ENCODE measurements at regions of chr13 and their contacts with region 1.

Region 1: DNA sequence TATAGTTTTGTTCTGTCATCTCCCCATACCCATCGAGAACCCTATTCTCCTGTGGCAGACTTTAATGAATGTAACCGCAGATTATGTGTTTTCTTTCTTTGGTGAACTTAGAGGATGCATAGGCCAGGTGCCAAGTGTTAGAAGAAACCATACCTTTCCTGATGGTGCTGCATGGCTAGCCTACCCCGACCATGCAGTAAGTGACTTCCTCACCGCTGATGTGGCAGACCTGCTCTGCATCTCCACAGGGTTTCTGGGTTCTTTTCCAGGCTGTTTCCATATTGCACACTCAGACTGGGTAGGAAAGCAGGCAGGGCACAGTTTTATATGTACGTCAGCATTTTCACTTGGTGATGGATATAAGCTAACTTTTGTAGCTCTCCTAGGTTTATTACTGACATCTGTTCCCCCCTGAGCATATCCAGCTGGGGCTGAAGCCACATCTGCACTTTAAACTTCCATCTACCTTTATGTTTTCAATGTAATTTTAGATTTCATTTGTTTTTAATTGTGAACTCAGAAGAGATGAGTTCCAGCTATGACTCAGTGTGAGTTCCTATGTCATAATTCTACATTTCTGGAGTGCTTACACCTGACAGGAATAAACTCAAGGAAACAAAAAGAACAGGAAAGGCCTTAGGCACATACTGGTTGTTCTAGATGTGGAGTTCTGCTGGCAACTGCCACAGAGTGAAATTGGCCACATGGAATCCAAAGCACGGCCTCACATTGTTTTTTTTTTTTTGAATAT is 42.3 kb downstream of the LRCH1 start:
- DNase-seq: no peak
- ATAC-seq: peak; percentile 60
- H3K4me3 ChIP-seq: peak overlapping the region; percentile 12; the same call in 1 of the 2 replicates
- H3K27ac ChIP-seq: peak overlapping the region; percentile 62
- H3K4me1 ChIP-seq: peaks cover 76% of the 10 kb centered on the region
- H3K27me3 ChIP-seq: no peaks in the 10 kb centered on the region
- CTCF ChIP-seq: no peak
- EP300 ChIP-seq: no peak; a peak in 1 of 4 replicates
- POLR2A ChIP-seq: no peak
- RAD21 ChIP-seq: no peak

Region 2: DNA sequence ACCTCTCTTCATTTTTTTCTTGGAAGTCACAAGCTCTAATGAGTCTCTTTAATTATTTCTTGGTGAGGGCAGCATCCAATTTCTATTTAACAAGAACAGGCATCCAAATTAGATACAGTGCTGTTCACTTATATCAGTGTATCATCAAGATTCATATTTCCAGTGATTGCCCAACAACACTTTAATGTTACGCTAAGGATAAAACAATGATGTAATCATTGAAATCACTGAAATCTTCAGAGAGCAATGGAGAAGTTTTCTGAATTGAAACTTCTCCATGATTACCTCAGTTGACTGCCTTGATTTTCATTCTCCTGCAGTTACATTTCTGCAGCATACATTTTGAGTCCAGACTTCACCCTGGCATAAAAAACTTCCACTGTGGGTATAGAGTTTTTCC is 59.5 kb before region 1 on chr13:
- CTCF ChIA-PET with region 1: no interaction called
- POLR2A ChIA-PET with region 1: no interaction called
- RAD21 ChIA-PET with region 1: no interaction called
- SMC1A ChIA-PET with region 1: no interaction called
- in situ Hi-C with region 1: no loop called
- intact Hi-C with region 1: no loop called
- DNase-seq: no peak
- ATAC-seq: no peak
- H3K4me3 ChIP-seq: no peak overlapping the region
- H3K27ac ChIP-seq: no peak overlapping the region
- H3K4me1 ChIP-seq: no peaks in the 10 kb centered on the region
- H3K27me3 ChIP-seq: no peaks in the 10 kb centered on the region
- CTCF ChIP-seq: no peak
- EP300 ChIP-seq: no peak
- POLR2A ChIP-seq: no peak
- RAD21 ChIP-seq: no peak

Region 3: GRCh38 chr13:46571189-46571908 is 24.0 kb before region 1 on chr13:
- CTCF ChIA-PET with region 1: interaction called, 6 read pairs
- POLR2A ChIA-PET with region 1: interaction called, 6 read pairs
- RAD21 ChIA-PET with region 1: interaction called, 97 read pairs
- SMC1A ChIA-PET with region 1: interaction called, 367 read pairs
- in situ Hi-C with region 1: no loop called
- intact Hi-C with region 1: no loop called
- DNase-seq: no peak
- ATAC-seq: peak; percentile 73
- H3K4me3 ChIP-seq: peak overlapping the region; percentile 20; the same call in 1 of the 2 replicates
- H3K27ac ChIP-seq: peak overlapping the region; percentile 78
- H3K4me1 ChIP-seq: peaks cover 53% of the 10 kb centered on the region
- H3K27me3 ChIP-seq: no peaks in the 10 kb centered on the region
- CTCF ChIP-seq: no peak
- EP300 ChIP-seq: no peak
- POLR2A ChIP-seq: no peak
- RAD21 ChIP-seq: no peak

Region 4: GRCh38 chr13:46633416-46633815 is 38.1 kb after region 1 on chr13:
- CTCF ChIA-PET with region 1: interaction called, 6 read pairs
- POLR2A ChIA-PET with region 1: interaction called, 4 read pairs
- RAD21 ChIA-PET with region 1: interaction called, 3 read pairs
- SMC1A ChIA-PET with region 1: interaction called, 11 read pairs
- in situ Hi-C with region 1: no loop called
- intact Hi-C with region 1: no loop called
- DNase-seq: no peak
- ATAC-seq: no peak
- H3K4me3 ChIP-seq: no peak overlapping the region
- H3K27ac ChIP-seq: no peak overlapping the region
- H3K4me1 ChIP-seq: peaks cover 18% of the 10 kb centered on the region
- H3K27me3 ChIP-seq: no peaks in the 10 kb centered on the region
- CTCF ChIP-seq: no peak
- EP300 ChIP-seq: no peak
- POLR2A ChIP-seq: no peak
- RAD21 ChIP-seq: no peak

Region 5: GRCh38 chr13:46648166-46648635 is 52.9 kb after region 1 on chr13:
- CTCF ChIA-PET with region 1: interaction called, 3 read pairs
- POLR2A ChIA-PET with region 1: interaction called, 9 read pairs
- RAD21 ChIA-PET with region 1: interaction called, 6 read pairs
- SMC1A ChIA-PET with region 1: interaction called, 12 read pairs
- in situ Hi-C with region 1: no loop called
- intact Hi-C with region 1: no loop called
- DNase-seq: no peak
- ATAC-seq: peak; percentile 95
- H3K4me3 ChIP-seq: no peak overlapping the region
- H3K27ac ChIP-seq: no peak overlapping the region
- H3K4me1 ChIP-seq: peaks cover 34% of the 10 kb centered on the region
- H3K27me3 ChIP-seq: no peaks in the 10 kb centered on the region
- CTCF ChIP-seq: no peak
- EP300 ChIP-seq: no peak
- POLR2A ChIP-seq: no peak
- RAD21 ChIP-seq: no peak

Region 6: DNA sequence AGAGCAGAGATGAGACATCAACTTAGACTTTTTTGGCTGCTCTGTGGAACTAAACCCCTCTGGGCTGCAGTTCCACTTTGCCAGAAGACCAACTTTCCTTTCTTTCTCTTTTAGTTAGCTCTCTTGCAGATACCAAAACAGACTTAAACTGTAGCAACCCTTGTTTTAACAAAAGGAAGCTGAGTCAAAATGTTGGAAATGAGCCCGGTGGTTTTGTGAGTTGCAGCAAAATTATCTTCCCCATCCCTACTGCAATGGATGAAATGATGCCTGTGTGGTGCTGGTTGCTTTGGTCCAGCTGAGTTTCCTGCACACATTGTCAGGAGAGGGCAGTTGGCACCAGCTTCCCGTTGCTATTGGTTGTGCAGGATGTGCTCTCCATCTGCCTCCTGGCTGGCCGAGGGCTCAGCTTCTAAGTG is 73.0 kb after region 1 on chr13:
- CTCF ChIA-PET with region 1: interaction called, 5 read pairs
- POLR2A ChIA-PET with region 1: interaction called, 3 read pairs
- RAD21 ChIA-PET with region 1: interaction called, 12 read pairs
- SMC1A ChIA-PET with region 1: interaction called, 95 read pairs
- in situ Hi-C with region 1: no loop called
- intact Hi-C with region 1: no loop called
- DNase-seq: no peak
- ATAC-seq: peak; percentile 11
- H3K4me3 ChIP-seq: peak overlapping the region; percentile 66
- H3K27ac ChIP-seq: peak overlapping the region; percentile 91
- H3K4me1 ChIP-seq: peaks cover 30% of the 10 kb centered on the region
- H3K27me3 ChIP-seq: no peaks in the 10 kb centered on the region
- CTCF ChIP-seq: no peak
- EP300 ChIP-seq: 0 out of 4 replicates have a peak, but pooled peaks of 1 of the 2 experiments have one; percentile 17
- POLR2A ChIP-seq: no peak
- RAD21 ChIP-seq: no peak

Region 7: GRCh38 chr13:46953331-46953730 is 358.0 kb after region 1 on chr13:
- CTCF ChIA-PET with region 1: no interaction called
- POLR2A ChIA-PET with region 1: no interaction called
- RAD21 ChIA-PET with region 1: no interaction called
- SMC1A ChIA-PET with region 1: no interaction called
- in situ Hi-C with region 1: no loop called
- intact Hi-C with region 1: no loop called
- DNase-seq: no peak
- ATAC-seq: no peak
- H3K4me3 ChIP-seq: no peak overlapping the region
- H3K27ac ChIP-seq: no peak overlapping the region
- H3K4me1 ChIP-seq: 0 out of 2 replicates have a peak, but pooled peaks cover 3% of the 10 kb centered on the region
- H3K27me3 ChIP-seq: no peaks in the 10 kb centered on the region
- CTCF ChIP-seq: no peak
- EP300 ChIP-seq: no peak
- POLR2A ChIP-seq: no peak
- RAD21 ChIP-seq: no peak

Measured in GM12878 (cell line).